Activated CD4-positive, alpha-beta memory T cell treated with anti-CD3 and anti-CD28 coated beads for 36 hours (primary cell): ENCODE measurements at regions of chr18 and their contacts with region 1.

Region 1: GRCh38 chr18:24014062-24014985 is at the start of gene TTC39C:
- DNase-seq: peak; percentile 93
- H3K4me3 Mint-ChIP-seq: peak within 1 kb of the TSS; percentile 89
- H3K27ac Mint-ChIP-seq: peak within 1 kb of the TSS; percentile 89
- H3K4me1 Mint-ChIP-seq: peaks cover 71% of the 10 kb centered on the region
- H3K27me3 Mint-ChIP-seq: no peaks in the 10 kb centered on the region
- total RNA-seq, gene TTC39C: 48.9 to 49.0 TPM

Region 2: DNA sequence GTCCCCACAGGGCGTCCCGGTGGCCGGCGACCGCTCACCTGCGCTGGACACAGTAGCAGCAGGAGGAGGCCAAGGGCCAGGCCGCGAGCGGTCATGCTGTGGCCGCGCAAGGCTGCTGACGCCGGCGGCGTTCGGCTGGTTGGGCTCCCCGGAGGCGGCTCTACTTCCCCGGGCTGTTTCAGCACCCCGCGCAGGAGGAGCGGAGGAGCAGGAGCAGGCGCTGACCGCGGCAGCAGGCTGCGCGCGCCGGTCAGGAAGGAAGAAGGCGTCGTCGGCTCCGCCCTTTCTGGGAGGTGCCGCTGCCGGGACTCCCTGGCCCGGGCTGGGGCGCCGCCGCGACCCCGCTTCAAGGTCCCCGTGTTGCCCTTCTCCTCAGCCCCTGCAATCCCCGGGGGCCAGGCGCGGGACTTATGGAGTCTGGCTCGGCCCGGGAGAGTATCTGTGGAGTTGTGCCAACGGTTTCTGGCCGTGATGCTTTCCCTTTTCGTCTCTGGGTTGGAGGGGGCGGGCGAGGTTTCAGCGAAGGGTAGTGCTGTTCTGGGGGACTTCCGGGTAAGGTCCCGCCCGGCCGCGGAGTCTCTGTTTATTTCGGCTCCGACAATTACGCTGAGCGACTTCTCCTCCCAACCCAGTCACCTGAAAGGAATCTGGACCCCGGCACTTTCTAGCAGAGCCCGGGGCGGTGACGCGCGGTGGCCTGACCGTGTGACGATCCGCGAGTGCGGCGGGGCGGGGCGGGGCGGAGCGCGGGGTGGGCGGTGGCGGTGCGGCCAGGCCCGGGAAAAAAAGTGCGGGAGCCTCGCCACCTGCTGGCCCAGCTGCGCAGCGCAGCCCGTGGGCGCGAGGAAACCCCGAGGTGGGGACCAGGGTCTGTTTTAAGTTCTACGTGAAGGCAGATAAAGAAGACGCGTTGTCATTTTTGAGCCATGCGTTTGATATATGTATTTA is 427.8 kb before region 1 on chr18 and contains the start of gene NPC1:
- CTCF ChIA-PET with region 1: no interaction called
- POLR2A ChIA-PET with region 1: no interaction called
- intact Hi-C with region 1: loop called (anchors 5 kb)
- DNase-seq: peak; percentile 94
- H3K4me3 Mint-ChIP-seq: peak within 1 kb of the TSS; percentile 95
- H3K27ac Mint-ChIP-seq: peak within 1 kb of the TSS; percentile 93
- H3K4me1 Mint-ChIP-seq: peaks cover 30% of the 10 kb centered on the region
- H3K27me3 Mint-ChIP-seq: peaks cover 3% of the 10 kb centered on the region
- total RNA-seq, gene NPC1: 39.3 to 39.9 TPM

Region 3: DNA sequence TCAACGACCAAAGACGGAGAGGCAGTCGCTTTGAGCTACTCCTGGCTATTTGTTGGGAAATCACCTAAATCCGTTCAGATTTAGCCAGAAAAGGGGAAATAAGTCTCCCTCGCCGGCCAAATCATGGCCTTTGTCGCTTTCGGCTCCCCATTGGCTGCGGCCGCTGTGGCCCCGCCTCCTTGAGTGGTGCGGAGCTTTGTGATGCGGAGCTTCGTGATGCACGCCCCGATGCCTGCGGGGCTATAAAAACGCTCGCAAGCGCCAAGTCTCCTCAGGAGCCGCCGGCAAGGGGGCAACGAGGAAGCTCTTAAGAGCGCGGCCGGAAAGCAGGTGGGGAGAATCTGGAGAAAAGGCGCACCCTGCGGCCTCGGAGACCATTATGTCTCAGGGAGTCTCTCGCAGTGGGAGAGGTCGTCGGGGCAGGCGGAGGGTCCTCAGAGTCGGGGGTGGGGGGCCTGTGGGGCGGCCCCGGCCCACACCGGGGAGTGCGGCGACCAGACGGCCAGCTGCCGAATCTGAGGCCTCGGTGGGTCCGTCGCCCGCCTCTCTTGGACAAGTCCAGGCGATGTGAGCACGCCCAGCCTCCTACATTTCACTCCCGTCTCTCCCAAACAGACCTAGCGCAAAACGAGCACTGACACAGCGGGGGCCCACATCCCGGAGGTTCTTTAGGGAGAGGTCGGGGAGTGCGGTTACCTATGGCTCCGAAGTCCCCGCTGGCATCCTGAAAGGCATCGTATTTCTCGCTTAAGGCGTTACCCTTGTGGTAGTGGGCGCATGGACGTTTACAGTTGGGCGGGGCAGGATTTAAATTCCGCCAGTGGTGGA is 124.7 kb after region 1 on chr18 and contains the start of gene CABYR:
- CTCF ChIA-PET with region 1: no interaction called
- POLR2A ChIA-PET with region 1: no interaction called
- intact Hi-C with region 1: loop called (anchors 5 kb)
- DNase-seq: peak; percentile 85
- H3K4me3 Mint-ChIP-seq: peak within 1 kb of the TSS; percentile 85
- H3K27ac Mint-ChIP-seq: peak within 1 kb of the TSS; percentile 15
- H3K4me1 Mint-ChIP-seq: peaks cover 26% of the 10 kb centered on the region
- H3K27me3 Mint-ChIP-seq: peaks cover 12% of the 10 kb centered on the region
- total RNA-seq, gene CABYR: 1.00 to 1.4 TPM